MCF 10A (cell line): ENCODE measurements at regions of chr13 and their contacts with region 1.

Region 1: DNA sequence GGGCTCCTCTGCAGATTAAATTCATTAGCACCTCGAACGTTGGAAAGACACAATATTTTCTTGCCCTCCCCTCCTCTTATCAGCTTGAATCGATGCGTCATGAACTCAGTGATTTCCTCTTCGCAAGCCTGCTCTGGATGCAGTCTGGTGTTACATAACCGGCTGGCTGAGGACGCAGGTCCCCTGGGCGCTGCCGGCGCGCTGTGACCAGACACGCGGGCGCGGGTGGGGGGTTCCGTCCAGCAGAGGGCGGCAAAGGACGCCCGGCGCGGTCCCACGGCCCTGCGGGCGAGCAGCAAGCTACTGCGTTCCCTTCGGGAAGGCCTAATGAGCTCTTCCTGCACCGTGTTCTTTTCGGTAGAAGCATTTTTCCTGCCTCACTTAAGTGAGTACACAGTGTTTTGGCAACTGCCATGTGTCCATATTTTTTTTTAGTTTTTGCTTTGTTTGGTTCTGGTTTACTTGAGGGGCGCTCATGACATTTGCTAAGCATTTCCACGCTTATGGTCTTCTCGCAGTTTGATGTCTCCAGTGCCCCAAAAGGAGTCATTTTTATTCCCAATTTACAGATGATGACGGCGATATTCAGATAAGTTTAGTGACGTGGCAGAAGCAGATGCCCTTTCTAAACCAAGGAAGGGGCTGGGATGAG is 112.2 kb upstream of the MBNL2 start:
- DNase-seq: peak; percentile 88
- H3K4me3 Mint-ChIP-seq: no peak overlapping the region
- H3K27ac Mint-ChIP-seq: no peak overlapping the region
- H3K4me1 Mint-ChIP-seq: peaks cover 6% of the 10 kb centered on the region
- H3K27me3 Mint-ChIP-seq: peaks cover 19% of the 10 kb centered on the region
- CTCF ChIP-seq: peak; percentile 99

Region 2: GRCh38 chr13:96934889-96935489 is 175.0 kb before region 1 on chr13:
- CTCF ChIA-PET with region 1: no interaction called
- POLR2A ChIA-PET with region 1: no interaction called
- intact Hi-C with region 1: no loop called
- DNase-seq: no peak
- H3K4me3 Mint-ChIP-seq: no peak overlapping the region
- H3K27ac Mint-ChIP-seq: no peak overlapping the region
- H3K4me1 Mint-ChIP-seq: no peaks in the 10 kb centered on the region
- H3K27me3 Mint-ChIP-seq: no peaks in the 10 kb centered on the region
- CTCF ChIP-seq: no peak

Region 3: GRCh38 chr13:97124916-97125809 is 15.2 kb after region 1 on chr13:
- CTCF ChIA-PET with region 1: interaction called, 77 read pairs
- POLR2A ChIA-PET with region 1: interaction called, 12 read pairs
- intact Hi-C with region 1: no loop called
- DNase-seq: peak; percentile 89
- H3K4me3 Mint-ChIP-seq: peak overlapping the region; percentile 28
- H3K27ac Mint-ChIP-seq: peak overlapping the region; percentile 21
- H3K4me1 Mint-ChIP-seq: peaks cover 47% of the 10 kb centered on the region
- H3K27me3 Mint-ChIP-seq: no peaks in the 10 kb centered on the region
- CTCF ChIP-seq: no peak

Region 4: GRCh38 chr13:97175041-97175440 is 65.1 kb after region 1 on chr13:
- CTCF ChIA-PET with region 1: interaction called, 15 read pairs
- POLR2A ChIA-PET with region 1: no interaction called
- intact Hi-C with region 1: no loop called
- DNase-seq: no peak
- H3K4me3 Mint-ChIP-seq: no peak overlapping the region
- H3K27ac Mint-ChIP-seq: no peak overlapping the region
- H3K4me1 Mint-ChIP-seq: no peaks in the 10 kb centered on the region
- H3K27me3 Mint-ChIP-seq: peaks cover 55% of the 10 kb centered on the region
- CTCF ChIP-seq: no peak

Region 5: DNA sequence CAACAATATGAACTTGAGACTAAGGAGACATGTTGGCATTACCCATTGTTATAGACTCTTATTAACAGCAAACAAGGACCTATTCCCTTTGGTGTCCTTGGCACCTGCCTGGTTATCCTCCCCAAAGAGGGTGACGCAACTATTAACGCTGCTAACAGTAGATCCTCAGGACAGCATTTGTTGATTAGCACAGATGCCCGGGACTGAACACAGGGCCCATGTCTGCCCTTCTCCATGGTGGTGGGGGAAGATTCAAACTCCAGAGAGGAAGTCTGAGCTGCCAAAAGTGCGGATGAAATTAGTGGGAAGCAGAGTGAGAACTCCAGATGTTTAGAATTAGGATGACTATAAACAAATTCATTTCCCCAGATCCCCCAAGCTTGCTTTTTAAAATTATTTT is 222.8 kb after region 1 on chr13:
- CTCF ChIA-PET with region 1: interaction called, 13 read pairs
- POLR2A ChIA-PET with region 1: no interaction called
- intact Hi-C with region 1: no loop called
- DNase-seq: no peak
- H3K4me3 Mint-ChIP-seq: no peak overlapping the region
- H3K27ac Mint-ChIP-seq: no peak overlapping the region
- H3K4me1 Mint-ChIP-seq: peaks cover 9% of the 10 kb centered on the region
- H3K27me3 Mint-ChIP-seq: no peaks in the 10 kb centered on the region
- CTCF ChIP-seq: no peak

Region 6: GRCh38 chr13:97359181-97360057 is 249.5 kb after region 1 on chr13:
- CTCF ChIA-PET with region 1: interaction called, 113 read pairs
- POLR2A ChIA-PET with region 1: interaction called, 6 read pairs
- intact Hi-C with region 1: loop called (anchors 1 kb)
- DNase-seq: peak; percentile 87
- H3K4me3 Mint-ChIP-seq: no peak overlapping the region
- H3K27ac Mint-ChIP-seq: peak overlapping the region; percentile 49
- H3K4me1 Mint-ChIP-seq: no peaks in the 10 kb centered on the region
- H3K27me3 Mint-ChIP-seq: no peaks in the 10 kb centered on the region
- CTCF ChIP-seq: peak; percentile 96